Transverse colon (tissue), 4 donors: ENCODE measurements at regions of chr6 and their contacts with region 1.

Region 1: DNA sequence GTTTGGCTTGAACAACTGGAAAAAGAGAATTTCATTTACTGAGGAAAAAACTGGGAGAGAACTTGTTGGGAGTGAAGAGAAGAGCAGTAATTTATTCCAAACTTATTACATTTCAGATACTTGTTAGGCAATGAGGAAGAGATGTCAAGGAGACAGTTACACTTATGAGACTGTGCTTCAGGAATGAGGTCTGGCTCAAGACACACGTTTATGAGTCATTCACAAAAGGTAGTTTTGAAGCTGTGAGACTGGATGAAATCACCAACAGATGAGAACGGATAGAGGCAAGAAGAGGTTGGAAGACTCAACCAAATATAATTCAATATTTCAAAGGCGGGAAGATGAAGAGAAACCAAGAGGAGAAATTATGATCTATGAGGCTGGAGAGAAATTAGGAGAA is 70.6 kb upstream of the DEFB112 start:
- DNase-seq: no peak
- H3K4me3 ChIP-seq: no peak overlapping the region
- H3K27ac ChIP-seq: no peak overlapping the region
- H3K4me1 ChIP-seq: no peaks in the 10 kb centered on the region
- H3K27me3 ChIP-seq: no peaks in the 10 kb centered on the region
- CTCF ChIP-seq: no peak
- EP300 ChIP-seq: no peak
- POLR2A ChIP-seq: no peak

Region 2: DNA sequence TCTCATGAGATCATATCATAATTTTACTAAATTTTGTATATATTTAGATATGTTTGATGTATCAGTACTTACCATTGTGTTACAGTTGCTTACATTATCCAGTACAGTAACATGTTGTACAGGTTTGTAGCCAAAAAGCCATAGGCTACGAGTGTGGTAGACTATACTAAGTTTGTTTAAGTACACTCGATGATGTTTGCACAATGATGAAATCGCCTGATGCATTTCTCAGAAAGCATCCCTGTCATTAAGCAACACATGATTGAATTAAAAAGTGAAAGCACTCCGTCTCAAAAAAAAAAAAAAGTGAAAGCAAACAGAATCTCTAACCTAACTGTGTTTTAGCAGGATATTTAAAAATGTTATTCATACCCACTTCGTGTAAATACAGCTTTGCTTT is 488.1 kb after region 1 on chr6:
- in situ Hi-C with region 1: loop called in 2 of 4 experiments (anchors 5 to 25 kb)
- intact Hi-C with region 1: no loop called
- DNase-seq: no peak
- H3K4me3 ChIP-seq: no peak overlapping the region
- H3K27ac ChIP-seq: no peak overlapping the region
- H3K4me1 ChIP-seq: no peaks in the 10 kb centered on the region
- H3K27me3 ChIP-seq: no peaks in the 10 kb centered on the region
- CTCF ChIP-seq: no peak
- EP300 ChIP-seq: no peak
- POLR2A ChIP-seq: no peak